Heart left ventricle (tissue), 16 donors: ENCODE measurements at regions of chr15 and their contacts with region 1.

Region 1: DNA sequence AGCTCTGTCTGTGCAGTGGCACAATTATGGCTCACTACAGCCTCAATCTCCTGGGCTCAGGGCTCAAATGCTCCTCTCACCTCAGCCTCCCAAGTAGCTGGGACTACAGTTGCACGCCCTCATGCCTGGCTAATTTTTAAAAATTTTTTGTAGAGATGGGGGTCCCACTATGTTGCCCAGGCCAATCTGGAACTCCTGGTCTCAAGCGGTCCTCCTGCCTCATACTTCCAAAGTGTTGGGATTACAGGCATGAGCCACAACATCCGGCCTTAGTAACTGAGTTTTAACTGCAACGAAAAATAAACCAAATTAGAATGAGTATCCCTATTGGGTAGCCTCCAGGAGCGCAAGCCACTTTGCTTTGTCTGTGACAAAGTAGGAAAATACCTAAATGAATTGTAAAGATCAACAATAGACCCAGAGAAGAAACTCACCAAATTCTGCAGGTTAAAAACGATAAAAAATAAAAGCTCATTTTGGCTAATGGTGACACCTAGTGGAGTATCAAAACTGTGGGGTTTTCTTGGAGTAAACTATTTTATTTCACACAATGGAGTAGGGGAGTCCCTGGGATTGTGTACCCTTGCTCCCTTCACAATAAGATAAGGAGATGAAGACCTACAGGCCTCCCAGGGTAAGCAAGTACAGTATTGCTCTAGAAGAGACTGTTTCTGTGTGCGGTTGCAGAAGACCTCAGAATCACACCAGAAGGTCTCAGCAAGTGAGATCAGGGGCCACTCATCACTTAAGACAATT is 21.0 kb upstream of the CA12 start:
- DNase-seq: no peak
- ATAC-seq: peak; percentile 26 to 47 (median 33)
- H3K4me3 ChIP-seq: no peak overlapping the region
- H3K27ac ChIP-seq: no peak overlapping the region
- H3K4me1 ChIP-seq: peaks cover 0 to 13% (median 0%) of the 10 kb centered on the region in 12 donors
- H3K27me3 ChIP-seq: no peaks in the 10 kb centered on the region
- CTCF ChIP-seq: peak; percentile 51 to 78 (median 68)
- POLR2A ChIP-seq: no peak

Region 2: GRCh38 chr15:63172376-63173109 is 230.1 kb before region 1 on chr15:
- intact Hi-C with region 1: loop called in 2 of 10 experiments (anchors 10 kb)
- DNase-seq: no peak
- ATAC-seq: no peak
- H3K4me3 ChIP-seq: no peak overlapping the region
- H3K27ac ChIP-seq: no peak overlapping the region
- H3K4me1 ChIP-seq: peaks cover 0 to 4% (median 0%) of the 10 kb centered on the region in 12 donors
- H3K27me3 ChIP-seq: no peaks in the 10 kb centered on the region
- CTCF ChIP-seq: no peak
- POLR2A ChIP-seq: no peak

Region 3: GRCh38 chr15:63288778-63289378 is 113.8 kb before region 1 on chr15:
- intact Hi-C with region 1: loop called (anchors 1 to 2 kb)
- DNase-seq: no peak
- ATAC-seq: peak in 3 of 4 donors; percentile 53 to 62 (median 61)
- H3K4me3 ChIP-seq: no peak overlapping the region
- H3K27ac ChIP-seq: no peak overlapping the region
- H3K4me1 ChIP-seq: peaks cover 0 to 25% (median 3%) of the 10 kb centered on the region in 12 donors
- H3K27me3 ChIP-seq: no peaks in the 10 kb centered on the region
- CTCF ChIP-seq: peak; percentile 47 to 81 (median 72)
- POLR2A ChIP-seq: no peak